ENCODE measurements at regions of chr4 and their contacts with region 1.

Region 1: DNA sequence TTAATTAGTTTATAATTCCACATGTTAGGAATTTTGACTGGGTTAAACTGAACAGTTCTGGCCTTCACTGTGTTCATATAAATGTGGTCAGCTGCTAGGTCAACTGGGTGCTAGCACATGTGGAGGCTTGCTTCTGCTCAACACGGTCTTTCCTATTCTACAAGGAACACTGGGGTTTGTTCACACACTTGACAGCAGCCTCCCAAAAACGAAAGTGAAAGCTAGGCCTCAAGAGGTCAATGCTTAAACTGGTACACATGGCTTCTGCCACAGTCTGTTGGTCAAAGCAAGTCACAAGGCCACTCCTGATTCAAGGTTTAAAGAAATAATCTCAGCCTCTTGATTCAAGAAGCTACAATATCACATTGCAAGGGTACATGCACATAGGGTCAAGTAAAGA is 126.5 kb downstream of the QDPR start:
- DNase-seq: peak in 21 of 42 donors; percentile 4 to 68 (median 20)

Region 2: GRCh38 chr4:17362430-17362829 is 23.0 kb before region 1 on chr4:
- intact Hi-C with region 1: loop called (anchors 2 kb)
- DNase-seq: no peak

Region 3: GRCh38 chr4:17544205-17544604 is 158.8 kb after region 1 on chr4:
- intact Hi-C with region 1: no loop called
- DNase-seq: peak; percentile 61 to 97 (median 90)